ENCODE measurements at regions of chr10 and their contacts with region 1.

Region 1: GRCh38 chr10:130110246-130111112 is at the start of gene C10orf143:
- DNase-seq: peak; percentile 97
- H3K4me3 Mint-ChIP-seq: peak within 1 kb of the TSS; percentile 83
- H3K27ac Mint-ChIP-seq: peak within 1 kb of the TSS; percentile 95
- H3K4me1 Mint-ChIP-seq: peaks cover 41% of the 10 kb centered on the region
- H3K27me3 Mint-ChIP-seq: no peaks in the 10 kb centered on the region

Region 2: DNA sequence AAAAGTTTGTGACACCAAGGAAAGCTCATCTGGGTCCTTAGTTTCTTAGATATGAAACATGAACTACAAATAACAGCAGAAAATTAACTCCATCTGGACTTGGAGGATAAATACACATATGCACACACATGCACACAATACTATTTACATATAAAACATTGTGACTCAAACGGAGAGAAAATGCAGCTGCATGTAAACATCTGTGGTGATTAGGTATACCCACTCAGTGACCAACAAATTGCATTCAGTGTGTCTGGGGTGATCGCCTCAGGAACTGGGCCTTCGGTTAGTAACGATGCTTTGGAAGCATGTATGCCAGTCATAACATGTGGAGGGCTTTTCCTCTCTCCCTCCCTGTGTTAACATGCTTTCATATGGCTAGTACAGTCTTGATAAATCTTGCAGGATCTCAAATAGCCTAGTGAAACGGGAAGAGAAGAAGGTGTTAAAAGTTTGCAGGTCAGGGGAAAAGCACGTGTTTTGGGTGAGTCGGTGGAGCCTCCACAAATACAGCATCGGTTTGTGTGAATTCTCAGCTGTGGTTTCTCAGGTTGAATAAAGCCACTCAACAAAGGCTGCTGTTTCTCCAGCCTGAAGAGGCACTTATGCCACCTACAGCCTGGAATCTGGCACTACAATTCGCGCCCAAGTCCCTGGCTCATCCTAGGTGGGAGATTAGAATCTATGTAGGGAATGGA is 17.0 kb after region 1 on chr10:
- CTCF ChIA-PET with region 1: interaction called, 15 read pairs
- DNase-seq: peak; percentile 63
- H3K4me3 Mint-ChIP-seq: no peak overlapping the region
- H3K27ac Mint-ChIP-seq: no peak overlapping the region
- H3K4me1 Mint-ChIP-seq: peaks cover 7% of the 10 kb centered on the region
- H3K27me3 Mint-ChIP-seq: peaks cover 66% of the 10 kb centered on the region

Region 3: GRCh38 chr10:130136226-130137089 is 26.0 kb after region 1 on chr10 and contains the start of gene GLRX3:
- CTCF ChIA-PET with region 1: interaction called, 34 read pairs
- DNase-seq: peak; percentile 90
- H3K4me3 Mint-ChIP-seq: peak within 1 kb of the TSS; percentile 93
- H3K27ac Mint-ChIP-seq: peak within 1 kb of the TSS; percentile 95
- H3K4me1 Mint-ChIP-seq: peaks cover 51% of the 10 kb centered on the region
- H3K27me3 Mint-ChIP-seq: peaks cover 23% of the 10 kb centered on the region